Activated CD4-positive, alpha-beta T cell treated with anti-CD3 and anti-CD28 coated beads for 36 hours (primary cell): ENCODE measurements at regions of chr9 and their contacts with region 1.

Region 1: DNA sequence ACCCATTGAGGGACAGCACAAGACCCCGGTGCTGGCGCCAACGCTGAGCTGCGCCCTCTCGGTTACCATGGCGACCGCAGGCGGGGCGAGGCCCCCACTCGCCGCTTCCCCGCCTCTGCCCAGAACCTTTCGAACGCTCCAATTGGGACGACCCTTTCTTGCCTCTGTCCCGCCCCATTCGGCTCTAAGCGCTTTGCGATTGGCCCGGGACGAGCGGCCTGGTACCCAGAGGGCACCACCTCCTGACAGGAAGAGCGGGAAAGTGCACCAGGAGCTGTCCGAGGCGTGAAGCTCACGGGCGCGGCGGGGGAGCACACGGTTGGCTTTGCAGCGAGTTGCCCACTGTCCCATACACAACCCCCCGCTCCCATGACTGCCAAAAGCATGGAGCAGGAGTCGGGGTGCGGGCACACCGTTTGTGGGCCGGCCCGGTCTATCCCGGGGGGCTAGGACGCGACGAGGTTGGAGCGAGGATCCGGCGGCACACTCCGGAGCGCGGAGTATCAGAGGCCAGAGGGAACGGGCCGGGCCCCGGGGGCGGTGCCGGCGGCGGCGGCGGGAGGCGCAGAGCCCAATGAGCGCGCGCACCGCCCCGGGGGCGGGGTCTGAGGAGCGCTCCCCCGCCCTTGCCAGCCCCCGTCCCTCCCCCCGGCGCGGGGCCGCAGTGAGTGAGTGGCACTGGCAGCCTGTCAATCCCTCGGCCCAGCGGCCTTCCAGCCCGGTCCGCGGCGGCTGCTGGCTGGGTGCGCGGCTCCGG is 978 bp upstream of the PBX3 start:
- DNase-seq: peak; percentile 96
- ATAC-seq: peak; percentile 85
- H3K4me3 Mint-ChIP-seq: peak overlapping the region; percentile 82
- H3K27ac Mint-ChIP-seq: peak overlapping the region; percentile 94
- H3K4me1 Mint-ChIP-seq: peaks cover 21% of the 10 kb centered on the region
- H3K27me3 Mint-ChIP-seq: peaks cover 12% of the 10 kb centered on the region

Region 2: DNA sequence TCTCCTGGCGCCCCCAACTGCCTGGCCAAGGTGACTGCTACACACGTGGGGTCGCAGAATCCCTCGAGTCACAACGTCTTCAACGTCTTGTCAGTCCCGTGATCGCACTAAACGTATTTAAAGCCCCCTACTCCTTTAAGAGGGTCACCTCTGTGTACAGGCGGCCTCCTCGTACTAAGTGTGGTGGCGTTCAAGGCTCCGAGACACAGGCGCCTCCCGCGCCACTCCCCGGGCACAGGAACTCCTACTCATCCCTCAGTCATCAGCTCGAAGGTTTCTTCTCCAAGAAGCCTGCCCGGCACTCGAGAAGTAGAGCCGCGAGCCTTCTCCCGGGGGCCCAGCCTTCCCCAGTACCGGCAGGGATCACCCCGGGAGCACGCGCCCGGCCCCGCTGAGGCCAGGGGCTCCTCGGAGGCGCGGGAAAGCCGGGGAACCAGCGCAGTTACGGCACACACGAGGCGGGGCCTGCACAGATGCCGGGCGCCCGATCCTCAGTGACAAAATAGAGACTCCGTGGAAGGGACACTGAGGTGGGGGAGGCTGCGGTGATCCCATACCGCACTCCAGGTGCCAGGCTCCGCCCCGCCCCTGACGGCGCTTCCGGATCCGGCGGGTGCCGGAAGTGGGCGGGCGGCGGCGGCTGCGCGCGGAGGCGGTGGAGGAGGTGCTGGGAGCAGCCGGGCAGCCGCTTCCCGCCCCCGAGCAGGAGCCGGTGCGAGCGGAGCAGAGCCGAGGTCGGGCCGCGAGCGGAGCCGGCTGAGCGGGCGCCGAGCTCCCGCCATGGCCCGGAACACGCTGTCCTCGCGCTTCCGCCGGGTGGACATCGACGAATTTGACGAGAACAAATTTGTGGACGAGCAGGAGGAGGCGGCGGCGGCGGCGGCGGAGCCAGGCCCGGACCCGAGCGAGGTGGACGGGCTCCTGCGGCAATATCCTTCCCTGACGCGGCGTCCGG is 877.4 kb before region 1 on chr9:
- CTCF ChIA-PET with region 1: no interaction called
- POLR2A ChIA-PET with region 1: no interaction called
- intact Hi-C with region 1: loop called in 1 of 2 experiments (anchors 2 kb)
- DNase-seq: peak; percentile 96
- ATAC-seq: peak; percentile 59
- H3K4me3 Mint-ChIP-seq: peak overlapping the region; percentile 98
- H3K27ac Mint-ChIP-seq: peak overlapping the region; percentile 98
- H3K4me1 Mint-ChIP-seq: peaks cover 42% of the 10 kb centered on the region
- H3K27me3 Mint-ChIP-seq: no peaks in the 10 kb centered on the region

Region 3: GRCh38 chr9:125200210-125201047 is 545.8 kb before region 1 on chr9 and contains the start of gene RABEPK:
- CTCF ChIA-PET with region 1: no interaction called
- POLR2A ChIA-PET with region 1: no interaction called
- intact Hi-C with region 1: loop called in 1 of 2 experiments (anchors 1 kb)
- DNase-seq: peak; percentile 95
- ATAC-seq: peak; percentile 98
- H3K4me3 Mint-ChIP-seq: peak within 1 kb of the TSS; percentile 83
- H3K27ac Mint-ChIP-seq: peak within 1 kb of the TSS; percentile 80
- H3K4me1 Mint-ChIP-seq: peaks cover 30% of the 10 kb centered on the region
- H3K27me3 Mint-ChIP-seq: no peaks in the 10 kb centered on the region
- total RNA-seq, gene RABEPK: 29.1 to 33.1 TPM

Region 4: GRCh38 chr9:125407974-125408900 is 338.0 kb before region 1 on chr9:
- CTCF ChIA-PET with region 1: interaction called, 5 read pairs
- POLR2A ChIA-PET with region 1: interaction called, 3 read pairs
- intact Hi-C with region 1: loop called in 1 of 2 experiments (anchors 2 kb)
- DNase-seq: peak; percentile 89
- ATAC-seq: peak; percentile 76
- H3K4me3 Mint-ChIP-seq: peak overlapping the region; percentile 62
- H3K27ac Mint-ChIP-seq: no peak overlapping the region
- H3K4me1 Mint-ChIP-seq: peaks cover 13% of the 10 kb centered on the region
- H3K27me3 Mint-ChIP-seq: peaks cover 27% of the 10 kb centered on the region

Region 5: DNA sequence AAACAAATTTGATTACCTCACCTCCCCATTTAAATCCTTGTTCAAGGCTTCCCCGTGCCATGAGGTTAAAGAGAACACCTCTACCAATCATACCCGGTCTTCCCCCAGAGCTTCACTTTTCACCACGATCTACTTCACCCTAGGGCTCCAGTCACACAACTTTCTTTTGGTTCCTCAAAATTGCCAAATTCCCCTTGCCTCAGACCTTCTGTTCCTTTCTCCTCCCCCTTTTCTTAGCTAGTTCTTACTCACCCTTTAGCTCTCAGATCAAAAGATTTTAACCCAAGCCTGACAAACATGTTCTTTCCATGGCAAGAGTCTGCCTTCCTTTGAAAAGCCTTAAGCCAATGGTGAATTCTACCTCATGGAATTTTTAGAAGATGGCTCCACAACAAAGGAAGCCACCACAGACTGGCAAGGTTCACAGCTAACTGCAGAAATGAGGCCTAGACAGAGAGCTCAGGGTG is 95.9 kb before region 1 on chr9:
- CTCF ChIA-PET with region 1: no interaction called
- POLR2A ChIA-PET with region 1: no interaction called
- intact Hi-C with region 1: loop called (anchors 1 to 5 kb)
- DNase-seq: peak; percentile 39
- ATAC-seq: peak; percentile 89
- H3K4me3 Mint-ChIP-seq: peak overlapping the region; percentile 55
- H3K27ac Mint-ChIP-seq: peak overlapping the region; percentile 87
- H3K4me1 Mint-ChIP-seq: peaks cover 71% of the 10 kb centered on the region
- H3K27me3 Mint-ChIP-seq: no peaks in the 10 kb centered on the region

Region 6: DNA sequence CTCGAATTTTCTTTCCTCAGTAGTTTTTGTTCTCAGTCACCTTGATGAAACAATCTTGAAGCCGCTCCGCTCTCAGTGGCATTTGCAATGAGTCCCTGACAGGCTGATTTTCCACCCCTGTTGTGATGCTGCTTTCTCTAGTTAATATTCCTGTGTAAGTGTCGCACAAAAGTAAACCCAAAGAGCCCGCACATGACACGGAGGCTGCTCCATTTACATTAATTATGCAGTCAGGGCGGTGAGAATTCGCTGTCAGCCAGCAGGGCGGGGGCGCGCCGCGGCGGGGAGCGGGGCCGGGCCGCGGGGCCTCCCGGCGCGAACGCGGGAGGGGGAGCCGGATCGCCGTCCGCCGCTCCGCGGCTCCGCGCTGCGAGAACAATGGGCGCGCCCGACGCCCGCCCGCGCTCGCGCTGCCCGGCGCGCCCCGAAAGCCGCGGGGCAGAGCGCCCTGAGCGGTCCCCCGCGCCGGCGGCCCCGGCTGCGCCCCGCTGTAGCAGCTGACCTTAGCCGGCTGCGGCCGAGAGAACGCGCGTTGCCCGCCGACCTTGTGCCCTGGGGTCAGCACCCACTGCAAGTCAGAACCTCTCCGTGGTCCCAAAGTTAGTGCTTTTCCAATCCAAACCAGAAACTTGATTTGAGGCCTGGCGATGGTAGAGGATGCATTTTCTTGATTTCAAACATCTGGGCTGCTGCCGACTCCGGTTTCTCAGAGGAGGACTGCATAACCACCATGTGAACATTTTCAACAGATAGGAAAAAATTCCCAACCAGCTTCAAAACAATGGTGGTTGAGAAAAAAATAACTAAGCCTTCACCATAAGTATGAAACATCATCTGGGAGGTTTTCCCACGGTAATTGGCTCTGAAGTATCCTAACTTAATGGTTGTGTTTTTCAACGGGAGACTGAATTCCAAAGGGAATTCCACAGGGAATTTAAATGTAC is 143.6 kb after region 1 on chr9:
- CTCF ChIA-PET with region 1: no interaction called
- POLR2A ChIA-PET with region 1: interaction called, 3 read pairs
- intact Hi-C with region 1: loop called in 1 of 2 experiments (anchors 5 kb)
- DNase-seq: peak; percentile 56
- ATAC-seq: peak; percentile 74
- H3K4me3 Mint-ChIP-seq: peak overlapping the region; percentile 66
- H3K27ac Mint-ChIP-seq: no peak overlapping the region
- H3K4me1 Mint-ChIP-seq: peaks cover 11% of the 10 kb centered on the region
- H3K27me3 Mint-ChIP-seq: peaks cover 19% of the 10 kb centered on the region